ENCODE measurements at regions of chr1 and their contacts with region 1.

Region 1: GRCh38 chr1:156471496-156472490 is 28.8 kb downstream of the MEF2D start:
- DNase-seq: peak; percentile 97
- ATAC-seq: peak; percentile 94
- H3K4me3 ChIP-seq: peak overlapping the region in 1 of 3 experiments; percentile 21; a peak in 1 of 6 replicates
- H3K27ac ChIP-seq: peak overlapping the region; percentile 77
- H3K4me1 ChIP-seq: peaks cover 65% of the 10 kb centered on the region
- H3K27me3 ChIP-seq: no peaks in the 10 kb centered on the region
- CTCF ChIP-seq: peak; percentile 40
- EP300 ChIP-seq: peak; percentile 34 to 95; a peak in 3 of 4 replicates
- POLR2A ChIP-seq: no peak
- RAD21 ChIP-seq: peak; percentile 54

Region 2: DNA sequence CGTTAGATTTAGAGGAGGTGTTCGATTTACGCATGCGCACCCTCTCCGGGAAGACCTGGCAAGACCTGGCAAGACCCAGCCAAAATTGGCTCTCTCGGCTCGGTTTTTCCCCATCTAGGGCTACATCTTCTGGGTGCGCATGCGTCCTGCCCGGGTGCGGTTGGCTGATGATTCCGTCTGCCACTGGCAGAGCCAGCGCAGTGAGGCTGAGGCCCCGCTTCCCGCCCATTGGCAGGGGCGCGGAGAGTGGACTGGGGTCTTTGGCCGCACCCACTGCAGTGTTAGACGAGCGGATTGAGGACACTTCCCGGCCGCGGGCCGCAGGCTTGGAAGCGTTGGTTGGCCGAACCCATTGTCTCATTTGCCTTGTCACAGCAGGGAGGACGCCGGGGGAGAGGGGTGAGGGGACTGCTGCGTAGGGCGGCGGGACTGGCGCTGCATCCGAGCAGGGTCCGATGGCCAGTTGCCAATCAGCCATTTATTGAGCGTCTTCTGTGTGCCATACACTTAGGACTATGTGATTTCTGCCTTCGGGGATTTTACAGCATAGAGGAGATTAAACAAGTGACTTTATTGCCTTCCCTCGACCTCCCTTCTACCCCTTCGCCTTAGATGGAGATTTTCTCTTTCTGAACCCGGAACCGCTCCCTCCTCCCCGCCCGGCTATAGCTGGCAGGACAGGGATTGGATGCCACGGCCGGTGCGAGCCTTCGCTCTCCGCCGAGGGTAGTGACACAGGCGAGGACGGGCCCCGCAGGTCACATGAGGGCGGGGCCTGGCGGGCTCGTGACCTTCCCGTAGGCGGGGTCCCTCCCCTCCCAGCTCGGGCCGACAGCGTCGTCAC is 14.9 kb before region 1 on chr1:
- CTCF ChIA-PET with region 1: no interaction called
- POLR2A ChIA-PET with region 1: interaction called, 17 read pairs
- in situ Hi-C with region 1: no loop called
- intact Hi-C with region 1: loop called (anchors 1 kb)
- DNase-seq: peak; percentile 96
- ATAC-seq: peak; percentile 91
- H3K4me3 ChIP-seq: peak overlapping the region; percentile 54 to 75 (median 55); a peak in 5 of 6 replicates
- H3K27ac ChIP-seq: peak overlapping the region; percentile 85
- H3K4me1 ChIP-seq: peaks cover 60% of the 10 kb centered on the region
- H3K27me3 ChIP-seq: no peaks in the 10 kb centered on the region
- CTCF ChIP-seq: no peak
- EP300 ChIP-seq: no peak; a peak in 1 of 4 replicates
- POLR2A ChIP-seq: peak; percentile 60 to 64
- RAD21 ChIP-seq: peak; percentile 3; the same call in 1 of the 2 replicates

Region 3: DNA sequence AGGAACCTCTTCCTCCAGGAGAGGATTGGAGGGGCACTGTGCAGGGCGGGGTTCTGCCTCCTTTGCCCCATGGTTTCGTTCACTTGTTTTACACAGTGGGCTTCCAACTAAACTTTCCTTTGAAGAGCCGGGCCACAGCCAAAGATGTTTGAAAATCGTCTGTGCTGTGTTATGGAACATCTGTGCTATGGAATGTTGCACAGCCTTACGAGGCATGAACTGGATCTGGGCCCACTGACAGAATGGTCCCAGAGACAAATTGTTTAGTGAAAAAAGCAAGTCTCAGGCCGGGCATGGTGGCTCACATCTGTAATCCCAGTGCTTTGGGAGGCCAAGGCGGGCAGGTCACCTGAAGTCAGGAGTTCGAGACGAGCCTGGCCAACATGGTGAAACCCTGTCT is 41.4 kb after region 1 on chr1:
- CTCF ChIA-PET with region 1: no interaction called
- POLR2A ChIA-PET with region 1: no interaction called
- in situ Hi-C with region 1: no loop called
- intact Hi-C with region 1: no loop called
- DNase-seq: no peak
- ATAC-seq: no peak
- H3K4me3 ChIP-seq: no peak overlapping the region
- H3K27ac ChIP-seq: no peak overlapping the region
- H3K4me1 ChIP-seq: no peaks in the 10 kb centered on the region
- H3K27me3 ChIP-seq: peaks cover 4 to 47% of the 10 kb centered on the region in 2 experiments; a peak in 4 of 5 replicates
- CTCF ChIP-seq: no peak
- EP300 ChIP-seq: no peak
- POLR2A ChIP-seq: no peak
- RAD21 ChIP-seq: no peak

Measured in HepG2 (cell line).